ENCODE measurements at regions of chr17 and their contacts with region 1.

Region 1: DNA sequence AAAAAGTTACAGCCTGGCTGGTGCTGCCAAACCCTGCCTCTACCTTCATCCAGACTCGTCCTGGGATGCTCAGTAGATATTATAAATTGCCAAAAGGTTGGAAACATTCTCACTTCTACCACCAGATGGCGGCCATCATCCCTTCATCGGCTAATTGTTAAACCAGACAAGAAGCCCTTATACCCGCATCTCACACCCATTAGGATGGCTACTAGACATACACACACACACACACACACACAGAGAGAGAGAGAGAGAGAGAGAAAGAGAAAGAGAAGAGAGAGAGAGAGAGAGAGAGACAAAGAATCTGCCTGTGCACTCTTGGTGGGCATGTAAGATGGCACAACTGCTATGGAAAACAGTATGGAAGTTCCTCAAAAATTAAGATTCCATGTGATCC is 15.0 kb upstream of the SCIMP start:
- DNase-seq: peak in 1 of 2 donors; percentile 50
- ATAC-seq: peak; percentile 54
- H3K4me3 ChIP-seq: no peak overlapping the region
- H3K27ac ChIP-seq: no peak overlapping the region
- H3K4me1 ChIP-seq: peaks cover 0 to 2% of the 10 kb centered on the region in 2 donors
- H3K27me3 ChIP-seq: no peaks in the 10 kb centered on the region

Region 2: DNA sequence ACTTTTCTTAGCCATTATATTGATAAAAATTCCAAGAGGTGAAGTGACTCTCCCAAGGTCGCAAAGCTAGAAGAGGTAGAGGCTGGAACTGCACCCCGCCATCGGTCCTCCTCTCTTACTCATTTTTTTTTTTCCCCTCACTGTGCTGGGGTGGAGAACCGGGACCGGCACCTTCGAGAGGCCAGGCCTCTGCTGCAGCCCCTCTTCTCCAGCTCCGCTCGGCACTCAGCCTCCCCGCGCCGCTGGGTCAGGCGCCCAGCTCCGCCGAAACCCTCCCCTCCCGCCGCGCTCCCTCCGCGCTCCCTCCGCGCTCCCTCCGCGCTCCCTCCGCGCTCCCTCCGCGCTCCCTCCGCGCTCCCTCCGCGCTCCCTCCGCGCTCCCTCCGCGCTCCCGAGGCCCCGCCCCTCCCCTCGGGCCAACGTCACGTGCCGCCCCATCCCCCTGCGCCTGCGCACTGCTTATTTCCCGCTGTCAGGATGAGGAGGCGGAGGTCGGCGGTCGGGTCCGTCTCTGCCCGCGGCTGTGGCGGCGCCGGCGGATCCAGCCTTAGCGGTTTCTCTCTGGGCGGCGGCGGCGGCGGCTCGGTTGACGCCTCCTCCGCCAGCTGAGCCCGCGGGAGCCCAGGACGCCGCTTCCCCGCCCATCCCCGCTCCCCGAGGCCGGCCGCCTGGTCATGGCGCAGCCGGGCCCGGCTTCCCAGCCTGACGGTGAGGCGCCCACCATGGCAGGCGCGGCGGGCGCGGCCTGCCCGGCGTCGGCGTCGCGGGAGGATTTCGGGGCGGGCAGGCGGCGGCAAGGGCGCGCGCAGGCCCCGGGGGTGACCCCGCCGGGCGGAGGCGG is 32.4 kb after region 1 on chr17 and contains the start of gene RABEP1:
- intact Hi-C with region 1: no loop called
- DNase-seq: peak; percentile 95 to 98
- ATAC-seq: peak; percentile 97
- H3K4me3 ChIP-seq: peak within 1 kb of the TSS; percentile 89 to 100
- H3K27ac ChIP-seq: peak within 1 kb of the TSS in 1 of 2 donors; percentile 69
- H3K4me1 ChIP-seq: peaks cover 2 to 6% of the 10 kb centered on the region in 2 donors
- H3K27me3 ChIP-seq: no peaks in the 10 kb centered on the region
- total RNA-seq, gene RABEP1: 42.3 to 47.5 TPM

Region 3: DNA sequence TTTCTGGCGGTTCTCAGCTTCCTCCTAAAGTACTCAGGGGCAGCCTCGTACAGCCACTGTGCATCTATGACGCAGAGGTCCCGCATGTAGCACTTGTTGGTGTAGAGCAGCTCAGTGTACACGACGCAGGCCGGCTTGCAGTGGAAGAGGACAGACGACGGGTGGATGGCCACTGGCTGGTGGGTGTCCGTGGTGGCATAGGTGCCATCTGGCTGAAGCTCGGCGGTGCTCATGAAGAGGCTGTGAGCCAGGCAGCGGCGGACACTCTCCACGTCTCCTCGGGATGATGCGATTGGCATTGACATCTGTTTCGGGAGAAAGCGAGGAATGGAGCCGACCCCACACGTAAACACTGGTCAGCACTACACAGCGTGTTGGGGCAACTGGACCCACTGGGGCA is 194.6 kb after region 1 on chr17:
- intact Hi-C with region 1: loop called (anchors 1 to 5 kb)
- DNase-seq: no peak
- ATAC-seq: no peak
- H3K4me3 ChIP-seq: no peak overlapping the region
- H3K27ac ChIP-seq: no peak overlapping the region
- H3K4me1 ChIP-seq: no peaks in the 10 kb centered on the region
- H3K27me3 ChIP-seq: no peaks in the 10 kb centered on the region

Region 4: DNA sequence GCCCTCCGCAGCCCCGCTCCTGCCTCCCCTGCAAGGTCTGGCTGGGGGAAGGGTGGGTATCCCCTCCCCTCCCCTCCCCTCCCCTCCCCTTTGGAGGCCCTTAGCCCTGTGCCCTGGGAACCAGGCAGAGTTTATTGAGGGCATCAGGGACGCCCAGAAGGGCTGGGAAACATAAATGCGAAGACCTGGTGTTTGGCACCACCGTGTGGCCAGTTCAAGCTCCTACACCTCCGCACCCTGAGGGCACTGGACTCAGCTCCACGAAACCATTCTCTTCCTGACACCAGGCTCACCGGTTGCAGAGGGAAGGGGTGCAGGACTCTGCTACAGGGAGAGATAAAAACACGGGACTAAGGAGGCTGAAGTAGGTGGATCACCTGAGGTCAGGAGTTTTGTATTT is 1186.4 kb after region 1 on chr17:
- intact Hi-C with region 1: loop called in 1 of 2 experiments (anchors 10 kb)
- DNase-seq: peak in 1 of 2 donors; percentile 63
- ATAC-seq: peak; percentile 84
- H3K4me3 ChIP-seq: no peak overlapping the region
- H3K27ac ChIP-seq: no peak overlapping the region
- H3K4me1 ChIP-seq: no peaks in the 10 kb centered on the region
- H3K27me3 ChIP-seq: no peaks in the 10 kb centered on the region

Measured in aorta (tissue), 5 donors.